ENCODE measurements at regions of chr10 and their contacts with region 1.

Region 1: DNA sequence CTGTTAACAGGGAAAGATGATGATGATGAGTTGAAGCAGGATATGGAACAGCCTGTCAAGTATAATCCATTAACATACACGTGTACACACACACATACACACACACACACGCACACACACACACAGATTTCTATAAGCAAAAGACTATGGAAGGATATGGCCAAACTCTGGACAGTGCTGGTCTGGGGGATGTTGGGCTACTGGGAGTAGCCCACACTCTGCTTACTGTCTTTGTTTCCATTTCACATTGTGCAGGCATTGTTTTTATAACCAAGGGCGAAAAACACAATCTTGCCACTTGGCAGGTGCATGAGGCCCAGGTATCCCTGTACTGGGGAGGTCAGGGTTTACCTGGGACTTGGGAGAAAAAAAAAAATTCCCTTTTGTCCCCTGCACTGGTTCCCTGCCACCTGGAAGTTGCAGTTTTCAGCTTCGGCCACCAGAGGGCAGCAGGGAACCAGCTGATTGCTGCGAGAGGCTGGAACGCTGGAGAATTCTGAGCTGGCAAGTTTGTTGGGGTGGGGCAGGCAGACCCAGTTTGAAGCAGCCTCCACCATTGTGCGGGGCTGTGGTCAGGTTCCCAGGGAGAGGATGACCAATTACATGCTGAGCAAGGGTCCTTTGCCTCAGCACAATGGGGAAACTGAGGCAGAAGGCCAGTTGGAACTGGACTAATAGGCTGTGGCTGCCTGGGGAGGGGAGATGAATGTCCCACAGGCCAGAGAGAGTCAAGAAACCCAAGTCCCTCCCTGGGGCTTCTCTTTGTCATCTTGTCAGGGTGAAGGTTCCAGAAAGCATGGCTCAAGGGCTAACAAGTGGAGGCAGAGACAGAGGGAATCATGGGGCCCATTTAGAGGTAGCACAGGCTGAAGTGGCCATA is 27.3 kb downstream of the PPIF start:
- DNase-seq: peak; percentile 64
- H3K4me3 ChIP-seq: no peak overlapping the region
- H3K27ac ChIP-seq: no peak overlapping the region
- H3K4me1 ChIP-seq: no peaks in the 10 kb centered on the region
- H3K27me3 ChIP-seq: no peaks in the 10 kb centered on the region
- CTCF ChIP-seq: peak; percentile 94 to 98 (median 96)
- POLR2A ChIP-seq: no peak

Region 2: GRCh38 chr10:79274279-79275104 is 100.1 kb before region 1 on chr10:
- intact Hi-C with region 1: no loop called
- DNase-seq: peak; percentile 51
- H3K4me3 ChIP-seq: no peak overlapping the region
- H3K27ac ChIP-seq: peak overlapping the region; percentile 61 to 65
- H3K4me1 ChIP-seq: peaks cover 21% of the 10 kb centered on the region
- H3K27me3 ChIP-seq: no peaks in the 10 kb centered on the region
- CTCF ChIP-seq: peak in 1 of 4 experiments; percentile 36
- POLR2A ChIP-seq: no peak

Region 3: GRCh38 chr10:79463578-79464496 is 89.3 kb after region 1 on chr10:
- intact Hi-C with region 1: loop called (anchors 2 kb)
- DNase-seq: no peak
- H3K4me3 ChIP-seq: no peak overlapping the region
- H3K27ac ChIP-seq: no peak overlapping the region
- H3K4me1 ChIP-seq: no peaks in the 10 kb centered on the region
- H3K27me3 ChIP-seq: no peaks in the 10 kb centered on the region
- CTCF ChIP-seq: no peak
- POLR2A ChIP-seq: no peak

Measured in prostate gland (tissue), 2 donors.